ENCODE measurements at regions of chr1 and their contacts with region 1.

Region 1: GRCh38 chr1:9239622-9240401 is 5.2 kb downstream of the H6PD start:
- DNase-seq: peak in 1 of 2 donors; percentile 77
- ATAC-seq: peak; percentile 2 to 3
- H3K4me3 ChIP-seq: peak overlapping the region; percentile 0 to 34 (median 32)
- H3K27ac ChIP-seq: peak overlapping the region; percentile 86 to 99 (median 92)
- H3K4me1 ChIP-seq: peaks cover 90 to 92% of the 10 kb centered on the region in 2 donors
- H3K27me3 ChIP-seq: no peaks in the 10 kb centered on the region
- CTCF ChIP-seq: no peak
- POLR2A ChIP-seq: peak; percentile 45 to 56

Region 2: GRCh38 chr1:9376886-9377333 is 137.1 kb after region 1 on chr1:
- in situ Hi-C with region 1: no loop called
- intact Hi-C with region 1: loop called (anchors 5 kb)
- DNase-seq: peak; percentile 93 to 95
- ATAC-seq: peak; percentile 94 to 95
- H3K4me3 ChIP-seq: peak overlapping the region in 2 of 4 donors; percentile 3 to 14
- H3K27ac ChIP-seq: peak overlapping the region; percentile 89 to 94 (median 92)
- H3K4me1 ChIP-seq: peaks cover 34 to 35% of the 10 kb centered on the region in 2 donors
- H3K27me3 ChIP-seq: no peaks in the 10 kb centered on the region
- CTCF ChIP-seq: peak in 1 of 5 experiments; percentile 16
- POLR2A ChIP-seq: peak; percentile 42 to 79

Measured in gastrocnemius medialis (tissue), 4 donors.